ENCODE measurements at regions of chr11 and their contacts with region 1.

Region 1: DNA sequence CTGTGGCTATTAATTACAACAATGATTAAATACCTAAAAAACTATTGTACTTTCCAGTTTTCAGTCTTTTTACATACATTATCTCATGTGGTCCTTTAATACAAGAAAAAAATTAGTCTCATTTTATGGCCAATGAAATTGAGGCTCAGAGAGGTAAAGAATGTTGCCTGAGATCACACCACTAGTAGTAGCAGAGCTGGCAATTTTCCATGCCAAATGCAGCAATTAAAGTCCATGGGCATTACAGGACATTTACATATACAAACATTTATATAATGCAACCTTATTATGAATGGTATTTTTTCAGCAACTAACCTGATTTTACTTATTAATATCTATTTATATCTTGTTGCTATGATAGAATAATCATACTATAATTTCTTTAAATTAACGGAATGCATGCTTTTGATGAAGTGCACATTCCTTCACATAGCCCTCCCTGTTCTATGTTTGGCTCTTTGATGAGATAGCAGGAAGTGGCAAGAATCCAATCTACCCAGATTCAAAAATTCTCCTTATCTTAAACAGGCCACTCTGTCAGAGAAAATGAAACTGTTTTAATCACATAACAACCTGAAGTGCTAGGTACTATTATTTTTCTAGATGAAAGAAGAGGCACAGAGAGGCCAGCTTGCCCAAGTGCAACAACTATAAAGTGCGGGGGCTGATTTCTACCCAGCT is 120.9 kb upstream of the LDLRAD3 start:
- DNase-seq: no peak
- ATAC-seq: no peak
- H3K4me3 ChIP-seq: no peak overlapping the region
- H3K27ac ChIP-seq: no peak overlapping the region
- H3K4me1 ChIP-seq: no peaks in the 10 kb centered on the region
- CTCF ChIP-seq: no peak
- EP300 ChIP-seq: no peak
- POLR2A ChIP-seq: no peak
- RAD21 ChIP-seq: no peak

Region 2: GRCh38 chr11:35485656-35486322 is 337.2 kb before region 1 on chr11:
- CTCF ChIA-PET with region 1: interaction called, 19 read pairs
- POLR2A ChIA-PET with region 1: no interaction called
- DNase-seq: peak; percentile 65 to 77
- ATAC-seq: peak; percentile 96 to 99
- H3K4me3 ChIP-seq: no peak overlapping the region
- H3K27ac ChIP-seq: no peak overlapping the region
- H3K4me1 ChIP-seq: peaks cover under 1% of the 10 kb centered on the region; the same call in 1 of the 3 replicates
- CTCF ChIP-seq: peak; percentile 81
- EP300 ChIP-seq: no peak
- POLR2A ChIP-seq: no peak
- RAD21 ChIP-seq: peak; percentile 69 to 75

Region 3: DNA sequence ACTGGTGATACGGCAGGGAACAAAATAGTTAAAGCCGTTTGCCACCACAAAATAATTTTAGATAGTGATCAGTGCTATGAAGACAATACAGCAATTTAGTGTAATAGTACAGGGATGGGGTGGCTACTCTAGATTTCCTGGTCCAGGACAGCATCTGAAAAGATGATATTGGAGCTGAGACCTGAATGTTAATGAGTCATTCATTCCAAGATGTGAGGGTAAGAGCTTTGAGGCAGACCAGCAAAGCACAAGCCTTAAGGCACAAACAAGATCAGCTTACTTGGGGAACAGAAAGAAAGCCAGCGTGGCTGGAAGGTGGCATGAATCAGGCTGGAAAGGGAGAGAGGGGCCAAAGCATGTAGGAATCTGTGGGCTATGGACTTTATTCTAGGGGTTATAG is 28.1 kb before region 1 on chr11:
- CTCF ChIA-PET with region 1: interaction called, 28 read pairs
- POLR2A ChIA-PET with region 1: no interaction called
- DNase-seq: no peak
- ATAC-seq: no peak
- H3K4me3 ChIP-seq: no peak overlapping the region
- H3K27ac ChIP-seq: no peak overlapping the region
- H3K4me1 ChIP-seq: peaks cover 41% of the 10 kb centered on the region
- CTCF ChIP-seq: no peak
- EP300 ChIP-seq: no peak
- POLR2A ChIP-seq: no peak
- RAD21 ChIP-seq: no peak

Region 4: DNA sequence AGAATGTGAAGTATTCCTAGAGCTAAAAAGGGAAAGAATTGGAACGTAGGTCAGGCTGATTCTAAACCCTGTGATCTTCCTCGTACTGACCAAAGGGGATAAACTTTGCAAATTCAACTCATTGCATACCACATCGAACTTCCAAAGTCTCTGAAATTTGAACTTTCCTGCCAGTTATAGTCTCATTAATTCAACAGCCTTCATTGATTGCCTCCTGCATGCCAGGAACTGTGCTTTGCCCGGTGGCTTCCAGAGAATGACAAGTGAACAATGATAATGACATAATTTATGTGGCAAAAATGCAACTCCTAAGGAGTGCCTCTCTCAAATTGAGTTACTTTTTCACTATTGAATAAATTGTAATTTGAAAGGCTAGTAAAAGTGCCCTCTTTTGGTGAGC is 13.2 kb after region 1 on chr11:
- CTCF ChIA-PET with region 1: interaction called, 95 read pairs
- POLR2A ChIA-PET with region 1: interaction called, 4 read pairs
- DNase-seq: no peak
- ATAC-seq: no peak
- H3K4me3 ChIP-seq: no peak overlapping the region
- H3K27ac ChIP-seq: no peak overlapping the region
- H3K4me1 ChIP-seq: no peaks in the 10 kb centered on the region
- CTCF ChIP-seq: no peak
- EP300 ChIP-seq: no peak
- POLR2A ChIP-seq: no peak
- RAD21 ChIP-seq: no peak

Region 5: DNA sequence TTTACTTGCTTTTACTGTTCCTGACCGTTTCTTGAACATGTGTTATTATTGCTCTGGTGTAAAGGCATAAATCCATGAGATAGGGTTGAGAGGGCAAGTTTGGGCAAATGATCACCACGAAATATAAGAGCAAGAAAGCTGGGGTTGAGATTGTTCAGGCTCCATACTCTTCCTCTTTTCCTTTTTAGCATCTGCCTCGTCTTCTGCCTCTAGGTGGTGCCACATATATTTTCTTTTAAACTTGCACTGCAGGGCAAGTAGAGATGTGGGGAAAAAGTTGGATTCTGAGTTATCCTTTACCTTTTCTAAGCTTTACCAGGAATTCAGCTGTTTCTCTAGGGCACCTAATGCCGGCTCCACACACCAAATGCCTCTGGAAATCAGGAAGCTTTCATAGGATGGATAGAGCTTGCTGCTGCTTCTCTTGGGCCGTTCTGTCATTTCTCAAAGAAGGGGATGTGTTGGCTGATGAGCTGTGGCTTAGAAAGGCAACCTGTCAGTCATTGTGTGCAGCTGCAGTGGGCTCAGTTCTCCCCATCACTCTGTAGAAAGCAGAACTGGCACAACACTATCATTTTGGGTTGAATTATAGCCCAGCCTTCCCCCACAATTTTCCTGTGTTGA is 219.1 kb after region 1 on chr11:
- CTCF ChIA-PET with region 1: interaction called, 11 read pairs
- POLR2A ChIA-PET with region 1: no interaction called
- DNase-seq: peak in 1 of 2 experiments; percentile 8
- ATAC-seq: peak; percentile 64 to 71; a peak in 4 of 6 replicates
- H3K4me3 ChIP-seq: no peak overlapping the region
- H3K27ac ChIP-seq: no peak overlapping the region
- H3K4me1 ChIP-seq: peaks cover 3% of the 10 kb centered on the region; the same call in 2 of the 3 replicates
- CTCF ChIP-seq: peak; percentile 65
- EP300 ChIP-seq: no peak
- POLR2A ChIP-seq: no peak
- RAD21 ChIP-seq: peak; percentile 48 to 60; a peak in 4 of 5 replicates

Region 6: DNA sequence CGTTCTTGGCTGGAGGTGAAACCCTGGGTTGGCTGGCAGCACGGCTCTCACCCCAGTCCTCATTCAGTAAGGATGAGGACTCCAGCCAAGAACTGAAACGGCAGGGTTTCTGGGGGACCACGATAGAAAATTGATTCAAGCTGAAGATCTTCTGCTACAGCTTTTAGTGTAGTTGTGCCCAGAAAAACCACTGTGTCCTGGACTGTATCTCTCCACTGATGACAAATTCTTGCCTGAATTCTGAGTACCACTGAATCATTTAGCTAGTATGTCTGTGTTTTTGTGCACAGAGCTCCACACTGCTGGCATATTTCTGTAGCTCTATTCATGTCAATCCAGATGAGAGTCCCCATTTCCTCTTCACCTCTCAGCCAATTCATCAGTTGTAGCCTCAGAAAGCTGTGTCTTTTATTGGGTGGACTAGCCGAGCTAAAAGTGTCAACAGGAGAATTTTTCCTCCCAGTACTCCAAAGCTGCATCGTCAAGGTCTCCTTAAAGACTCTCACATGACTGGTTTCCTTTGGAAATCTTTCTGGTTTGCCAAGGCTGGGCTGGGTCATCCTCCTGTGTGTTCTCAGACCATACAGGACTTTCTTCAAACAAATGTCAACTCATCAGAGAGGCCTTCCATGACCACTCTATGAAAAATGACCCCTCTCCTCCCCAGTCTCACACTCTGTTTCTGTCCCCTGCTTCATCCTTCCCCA is 265.5 kb after region 1 on chr11:
- CTCF ChIA-PET with region 1: interaction called, 11 read pairs
- POLR2A ChIA-PET with region 1: no interaction called
- DNase-seq: no peak
- ATAC-seq: no peak
- H3K4me3 ChIP-seq: no peak overlapping the region
- H3K27ac ChIP-seq: no peak overlapping the region
- H3K4me1 ChIP-seq: no peaks in the 10 kb centered on the region
- CTCF ChIP-seq: no peak
- EP300 ChIP-seq: no peak
- POLR2A ChIP-seq: no peak
- RAD21 ChIP-seq: no peak

Region 7: DNA sequence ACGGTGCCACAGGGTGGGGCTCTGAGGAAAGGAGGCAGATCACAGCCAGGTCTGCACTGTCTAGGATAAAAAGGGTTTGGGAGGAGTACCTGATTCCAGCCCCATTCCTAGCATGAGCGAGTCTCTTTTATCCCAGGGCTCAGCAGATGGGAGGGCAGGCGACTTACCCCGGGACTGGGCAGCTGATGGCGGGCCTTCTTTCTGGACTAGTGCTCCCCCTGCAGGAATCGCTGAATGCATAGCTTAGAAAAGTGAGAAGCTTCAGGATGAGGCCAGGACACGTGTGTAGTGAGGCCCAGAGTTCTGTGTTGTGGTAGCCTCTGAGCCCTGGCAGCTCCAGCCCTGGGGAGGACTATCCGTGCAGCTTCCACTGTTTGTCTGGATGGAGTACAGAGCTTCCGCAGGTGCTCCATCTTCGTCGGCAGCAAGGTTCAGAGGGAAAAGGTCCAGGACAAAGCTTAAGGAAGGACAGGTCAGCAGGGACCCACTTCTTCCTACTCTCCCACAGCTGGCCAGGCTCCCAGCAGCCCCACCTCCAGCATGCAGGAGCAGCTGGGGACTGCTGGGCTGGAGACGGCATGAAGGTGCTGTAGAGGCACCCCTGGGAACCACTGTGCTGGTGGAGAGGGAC is 435.9 kb after region 1 on chr11:
- CTCF ChIA-PET with region 1: interaction called, 94 read pairs
- POLR2A ChIA-PET with region 1: interaction called, 4 read pairs
- DNase-seq: peak; percentile 60 to 68
- ATAC-seq: peak; percentile 90 to 97
- H3K4me3 ChIP-seq: no peak overlapping the region
- H3K27ac ChIP-seq: 0 out of 6 replicates have a peak overlapping the region, but pooled peaks of 1 of the 2 experiments have one; percentile 6
- H3K4me1 ChIP-seq: 0 out of 3 replicates have a peak, but pooled peaks cover 4% of the 10 kb centered on the region
- CTCF ChIP-seq: peak; percentile 68
- EP300 ChIP-seq: no peak
- POLR2A ChIP-seq: no peak
- RAD21 ChIP-seq: peak; percentile 78 to 82

Measured in A549 (cell line).